ENCODE measurements at regions of chr18 and their contacts with region 1.

Region 1: DNA sequence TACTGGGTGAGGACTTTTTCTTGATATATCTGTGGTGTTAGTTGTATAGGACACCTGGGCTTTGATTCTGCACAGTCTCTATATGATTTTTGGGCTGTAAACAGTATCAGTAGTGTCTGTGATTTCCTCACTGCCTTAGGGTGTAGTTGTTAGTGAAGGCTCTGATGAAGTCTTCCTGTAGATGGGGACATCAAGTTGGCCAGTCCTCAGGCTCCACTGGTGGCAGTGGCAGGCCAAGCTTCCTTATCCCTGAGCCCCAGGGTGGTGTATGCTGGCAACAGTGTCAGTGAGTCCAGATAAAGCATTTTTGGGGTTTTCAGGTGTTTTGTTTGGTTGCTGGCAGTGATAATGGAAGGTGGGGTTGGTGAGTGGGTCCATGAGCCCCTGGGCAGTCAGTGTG is 961.4 kb downstream of the DSC3 start:
- DNase-seq: no peak
- ATAC-seq: no peak
- H3K4me3 ChIP-seq: no peak overlapping the region
- H3K4me3 Mint-ChIP-seq: no peak overlapping the region
- H3K27ac ChIP-seq: no peak overlapping the region
- H3K27ac Mint-ChIP-seq: no peak overlapping the region
- H3K4me1 ChIP-seq: no peaks in the 10 kb centered on the region
- H3K4me1 Mint-ChIP-seq: no peaks in the 10 kb centered on the region
- H3K27me3 ChIP-seq: no peaks in the 10 kb centered on the region
- H3K27me3 Mint-ChIP-seq: no peaks in the 10 kb centered on the region

Region 2: GRCh38 chr18:29326214-29326613 is 754.9 kb before region 1 on chr18:
- CTCF ChIA-PET with region 1: no interaction called
- POLR2A ChIA-PET with region 1: no interaction called
- intact Hi-C with region 1: no loop called
- DNase-seq: no peak
- ATAC-seq: no peak
- H3K4me3 ChIP-seq: no peak overlapping the region
- H3K4me3 Mint-ChIP-seq: no peak overlapping the region
- H3K27ac ChIP-seq: no peak overlapping the region
- H3K27ac Mint-ChIP-seq: no peak overlapping the region
- H3K4me1 ChIP-seq: no peaks in the 10 kb centered on the region
- H3K4me1 Mint-ChIP-seq: no peaks in the 10 kb centered on the region
- H3K27me3 ChIP-seq: no peaks in the 10 kb centered on the region
- H3K27me3 Mint-ChIP-seq: no peaks in the 10 kb centered on the region

Region 3: DNA sequence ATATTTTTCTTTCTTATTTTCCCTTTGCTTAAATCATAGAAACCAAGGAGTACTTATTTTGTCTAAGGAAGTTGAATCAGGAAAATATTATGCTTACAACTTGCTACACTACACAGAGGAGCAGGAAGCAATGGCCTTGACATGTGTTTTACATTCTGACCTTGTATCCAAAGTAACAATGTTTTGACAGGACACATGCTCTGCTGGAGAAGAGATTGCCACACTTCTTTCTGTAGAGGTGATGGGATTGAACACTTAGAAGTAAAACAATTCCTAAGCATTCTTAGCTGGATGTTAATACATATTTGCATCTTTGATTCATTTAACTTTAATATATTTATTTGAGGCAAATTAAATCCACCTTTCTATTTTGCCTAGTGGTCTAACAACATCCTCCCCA is 32.3 kb after region 1 on chr18:
- CTCF ChIA-PET with region 1: no interaction called
- POLR2A ChIA-PET with region 1: no interaction called
- intact Hi-C with region 1: loop called in 1 of 2 experiments (anchors 5 kb)
- DNase-seq: no peak
- ATAC-seq: no peak
- H3K4me3 ChIP-seq: no peak overlapping the region
- H3K4me3 Mint-ChIP-seq: no peak overlapping the region
- H3K27ac ChIP-seq: no peak overlapping the region
- H3K27ac Mint-ChIP-seq: no peak overlapping the region
- H3K4me1 ChIP-seq: no peaks in the 10 kb centered on the region
- H3K4me1 Mint-ChIP-seq: no peaks in the 10 kb centered on the region
- H3K27me3 ChIP-seq: no peaks in the 10 kb centered on the region
- H3K27me3 Mint-ChIP-seq: no peaks in the 10 kb centered on the region

Measured in naive thymus-derived CD4-positive, alpha-beta T cell (primary cell).